ENCODE measurements at regions of chr5 and their contacts with region 1.

Region 1: DNA sequence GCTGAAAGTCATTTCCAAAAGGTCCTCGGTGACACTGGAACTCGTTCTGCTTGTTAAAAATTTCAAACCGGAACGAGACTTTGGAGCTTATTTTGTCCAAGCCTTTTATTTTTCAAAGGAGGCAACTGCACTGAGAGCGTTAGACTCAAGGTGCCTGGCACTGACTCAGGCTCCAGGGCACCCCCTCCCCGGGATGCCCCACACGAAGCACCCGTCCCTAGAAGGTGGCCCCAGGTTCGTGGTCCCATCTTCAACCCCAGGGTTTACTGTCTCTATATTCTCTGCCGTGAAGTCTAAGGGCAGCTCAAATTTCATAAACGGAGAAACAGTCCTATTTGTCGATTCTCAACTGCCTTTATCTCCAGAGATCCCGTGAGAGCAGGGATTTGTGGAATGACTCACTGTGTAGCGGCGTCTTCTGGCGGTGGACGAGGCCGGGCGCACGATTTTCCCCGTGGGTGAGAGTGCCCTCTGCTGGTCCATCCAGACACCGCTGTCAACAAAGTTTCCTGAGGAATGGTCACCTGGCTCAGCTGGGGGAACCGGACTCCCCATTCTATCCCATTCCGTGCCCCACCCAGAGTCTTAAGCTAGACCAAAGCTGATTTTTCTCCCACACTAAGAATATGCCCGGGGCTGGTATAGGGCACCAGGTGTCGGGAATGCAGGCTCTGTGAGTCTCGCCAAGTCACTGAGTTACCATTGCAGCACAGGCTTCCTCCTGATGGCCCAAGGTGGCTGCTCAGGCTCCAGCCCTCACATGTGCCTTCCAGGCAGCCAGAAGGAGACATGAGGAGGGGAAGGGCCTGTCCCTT is 27.1 kb upstream of the SLC6A19 start:
- DNase-seq: peak in 9 of 10 donors; percentile 47 to 71 (median 53)
- H3K4me3 ChIP-seq: no peak overlapping the region
- H3K27ac ChIP-seq: no peak overlapping the region
- H3K27me3 ChIP-seq: peaks cover 0 to 6% (median 0%) of the 10 kb centered on the region in 45 donors
- CTCF ChIP-seq: peak; percentile 56 to 84 (median 73)

Region 2: GRCh38 chr5:923281-923873 is 251.0 kb before region 1 on chr5:
- intact Hi-C with region 1: loop called in 1 of 2 experiments (anchors 5 kb)
- DNase-seq: peak in 8 of 10 donors; percentile 35 to 76 (median 57)
- H3K4me3 ChIP-seq: no peak overlapping the region
- H3K27ac ChIP-seq: no peak overlapping the region
- H3K27me3 ChIP-seq: peaks cover 0 to 43% (median 22%) of the 10 kb centered on the region in 45 donors
- CTCF ChIP-seq: peak in 55 of 56 donors; percentile 48 to 89 (median 74)

Region 3: GRCh38 chr5:1141834-1142233 is 32.5 kb before region 1 on chr5:
- intact Hi-C with region 1: no loop called
- DNase-seq: no peak
- H3K4me3 ChIP-seq: no peak overlapping the region
- H3K27ac ChIP-seq: no peak overlapping the region
- H3K27me3 ChIP-seq: peaks cover 0 to 12% (median 0%) of the 10 kb centered on the region in 45 donors
- CTCF ChIP-seq: no peak

Region 4: DNA sequence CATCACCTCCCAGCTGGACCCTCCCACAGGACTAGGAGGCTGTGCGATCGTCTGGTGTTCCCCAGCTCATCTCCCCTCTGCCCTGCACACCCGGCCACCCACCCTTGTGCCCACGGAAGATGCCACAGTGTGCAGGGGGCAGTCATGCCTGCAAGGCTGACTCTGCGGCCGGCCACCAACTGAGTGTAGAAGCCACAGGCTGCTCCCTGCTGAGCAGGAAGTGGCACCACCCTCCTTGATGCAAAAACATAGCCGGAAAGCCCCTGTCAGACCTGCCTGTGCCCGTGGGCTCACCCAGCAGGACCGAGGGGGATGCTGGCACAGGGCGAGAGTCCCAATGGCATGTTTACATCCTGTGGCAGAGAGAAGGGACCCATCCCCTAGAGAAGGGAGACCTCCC is 22.2 kb before region 1 on chr5:
- intact Hi-C with region 1: no loop called
- DNase-seq: no peak
- H3K4me3 ChIP-seq: no peak overlapping the region
- H3K27ac ChIP-seq: no peak overlapping the region
- H3K27me3 ChIP-seq: peaks cover 0 to 56% (median 39%) of the 10 kb centered on the region in 45 donors
- CTCF ChIP-seq: no peak

Region 5: DNA sequence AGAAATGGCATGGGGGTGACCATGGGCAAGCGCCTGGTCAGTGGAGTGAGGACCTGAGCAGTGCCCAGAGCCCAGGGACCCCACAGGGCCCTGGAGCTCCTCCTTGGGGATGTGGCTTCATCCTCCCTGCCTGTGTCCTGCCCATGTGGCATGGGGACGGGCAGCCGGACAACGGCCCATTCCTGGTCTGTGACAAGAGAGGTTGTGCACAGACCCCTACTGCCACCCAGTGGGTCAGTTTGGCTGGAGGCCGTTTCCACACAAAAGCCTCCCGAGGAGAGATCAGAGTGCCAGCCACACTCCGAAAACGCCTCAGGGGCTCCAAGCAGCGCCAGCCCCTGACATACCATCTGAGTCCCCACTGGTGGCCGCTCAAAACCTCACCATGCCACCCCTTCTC is 70.6 kb after region 1 on chr5:
- intact Hi-C with region 1: loop called in 1 of 2 experiments (anchors 5 kb)
- DNase-seq: peak in 1 of 10 donors; percentile 17
- H3K4me3 ChIP-seq: peak overlapping the region in 1 of 59 donors; percentile 40
- H3K27ac ChIP-seq: no peak overlapping the region
- H3K27me3 ChIP-seq: peaks cover 0 to 58% (median 22%) of the 10 kb centered on the region in 45 donors
- CTCF ChIP-seq: peak in 26 of 56 donors; percentile 8 to 42 (median 20)

Region 6: DNA sequence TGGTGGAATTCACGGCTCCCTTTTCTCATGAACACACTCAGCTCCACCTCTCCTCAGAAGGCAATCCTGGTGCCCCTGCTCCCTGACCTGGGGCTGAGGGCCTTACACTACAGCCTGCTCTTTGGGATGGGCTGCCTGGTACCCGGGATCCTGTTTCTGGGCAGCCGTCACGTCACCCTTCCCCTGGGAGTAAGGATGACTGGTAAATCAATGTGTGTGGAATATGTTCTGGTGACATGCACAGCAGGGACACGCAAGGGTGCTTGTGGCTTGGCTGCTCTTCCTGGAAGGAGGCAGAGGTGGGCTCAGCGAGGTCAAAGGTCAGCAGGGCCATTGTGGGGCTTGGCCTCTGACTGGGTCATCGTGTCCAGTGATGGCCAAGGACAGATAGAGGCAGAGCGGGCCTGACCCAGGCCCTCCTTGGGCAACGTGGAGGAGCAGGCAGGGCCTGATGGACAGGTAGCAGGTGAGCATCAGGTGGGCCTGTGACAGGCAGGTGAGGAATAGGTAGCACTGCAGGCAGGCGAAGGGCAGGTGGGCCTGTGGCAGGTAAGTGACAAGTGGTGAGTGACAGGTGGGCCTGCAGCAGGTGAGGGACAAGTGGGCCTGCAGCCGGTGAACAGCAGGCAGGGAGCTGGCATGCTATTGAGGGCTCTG is 1107.8 kb after region 1 on chr5:
- intact Hi-C with region 1: no loop called
- DNase-seq: no peak
- H3K4me3 ChIP-seq: no peak overlapping the region
- H3K27ac ChIP-seq: no peak overlapping the region
- H3K27me3 ChIP-seq: peaks cover 0 to 3% (median 0%) of the 10 kb centered on the region in 45 donors
- CTCF ChIP-seq: no peak